Posterior vena cava (tissue), 2 donors: ENCODE measurements at regions of chr21 and their contacts with region 1.

Region 1: GRCh38 chr21:42695697-42696380 is 42.4 kb downstream of the PDE9A start:
- DNase-seq: peak; percentile 57

Region 2: GRCh38 chr21:42754270-42754933 is 58.6 kb after region 1 on chr21:
- intact Hi-C with region 1: loop called in 1 of 2 experiments (anchors 10 kb)
- DNase-seq: peak; percentile 37